Heart right ventricle (tissue), 16 donors: ENCODE measurements at regions of chr3 and their contacts with region 1.

Region 1: DNA sequence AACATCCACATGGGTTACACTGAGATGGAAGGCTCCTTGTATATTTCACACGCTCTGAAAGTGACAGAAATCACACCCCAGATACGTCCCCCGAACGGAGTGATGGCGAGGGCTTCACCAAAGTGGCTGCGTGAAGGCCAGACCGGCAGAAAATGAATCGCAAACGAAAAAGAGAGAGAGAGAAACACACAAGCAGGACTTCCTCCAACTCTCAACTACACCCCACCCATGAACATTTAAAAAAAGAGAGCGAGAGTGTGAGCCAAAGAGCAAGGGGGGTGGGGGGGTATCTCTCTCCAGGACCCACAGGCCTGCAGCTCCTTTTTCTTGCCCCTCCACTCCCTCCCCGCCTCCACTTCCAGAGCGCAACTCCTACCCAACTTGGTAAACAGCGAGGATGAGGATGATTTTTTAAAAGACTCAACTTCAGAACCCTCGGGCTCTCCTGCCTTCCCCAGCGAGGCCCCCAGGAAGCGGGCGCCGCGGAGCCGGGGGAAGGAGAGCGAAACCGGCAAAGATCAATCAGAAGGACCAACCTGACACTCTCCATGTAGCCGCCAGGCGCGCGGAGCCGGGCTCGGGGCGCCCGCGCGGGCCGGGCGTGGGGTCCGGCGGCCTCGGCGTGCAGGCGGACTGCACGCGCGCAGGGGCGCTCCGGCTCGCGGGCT is 519.1 kb downstream of the FOXP1 start:
- DNase-seq: peak in 1 of 2 donors; percentile 50
- ATAC-seq: peak; percentile 35 to 72 (median 56)
- H3K4me3 ChIP-seq: peak overlapping the region; percentile 26 to 78 (median 68)
- H3K27ac ChIP-seq: peak overlapping the region; percentile 66 to 98 (median 94)
- H3K4me1 ChIP-seq: peaks cover 5 to 73% (median 58%) of the 10 kb centered on the region in 9 donors
- H3K27me3 ChIP-seq: no peaks in the 10 kb centered on the region
- CTCF ChIP-seq: no peak

Region 2: DNA sequence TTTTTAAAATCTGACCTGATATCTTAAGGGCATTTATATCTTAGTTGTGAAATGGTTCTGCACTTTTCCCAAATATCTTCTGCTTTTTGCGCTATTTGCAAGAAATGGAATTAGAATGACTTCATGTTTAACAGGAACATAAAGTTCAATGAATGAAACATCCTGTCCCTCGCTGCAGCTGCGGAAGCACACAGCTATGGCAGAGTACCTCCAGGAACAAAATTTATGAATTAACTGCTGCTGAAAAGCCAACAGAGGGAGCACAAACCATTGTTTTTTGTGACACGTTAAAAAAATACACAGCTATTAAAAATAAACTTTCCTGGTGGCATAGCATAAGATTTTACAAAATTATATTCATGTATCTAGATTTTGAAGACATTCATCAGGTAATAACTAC is 347.6 kb before region 1 on chr3:
- intact Hi-C with region 1: loop called in 2 of 10 experiments (anchors 5 to 10 kb)
- DNase-seq: peak; percentile 14 to 32
- ATAC-seq: peak in 5 of 8 donors; percentile 49 to 88 (median 62)
- H3K4me3 ChIP-seq: no peak overlapping the region
- H3K27ac ChIP-seq: no peak overlapping the region
- H3K4me1 ChIP-seq: no peaks in the 10 kb centered on the region
- H3K27me3 ChIP-seq: no peaks in the 10 kb centered on the region
- CTCF ChIP-seq: peak; percentile 17 to 72 (median 54)

Region 3: DNA sequence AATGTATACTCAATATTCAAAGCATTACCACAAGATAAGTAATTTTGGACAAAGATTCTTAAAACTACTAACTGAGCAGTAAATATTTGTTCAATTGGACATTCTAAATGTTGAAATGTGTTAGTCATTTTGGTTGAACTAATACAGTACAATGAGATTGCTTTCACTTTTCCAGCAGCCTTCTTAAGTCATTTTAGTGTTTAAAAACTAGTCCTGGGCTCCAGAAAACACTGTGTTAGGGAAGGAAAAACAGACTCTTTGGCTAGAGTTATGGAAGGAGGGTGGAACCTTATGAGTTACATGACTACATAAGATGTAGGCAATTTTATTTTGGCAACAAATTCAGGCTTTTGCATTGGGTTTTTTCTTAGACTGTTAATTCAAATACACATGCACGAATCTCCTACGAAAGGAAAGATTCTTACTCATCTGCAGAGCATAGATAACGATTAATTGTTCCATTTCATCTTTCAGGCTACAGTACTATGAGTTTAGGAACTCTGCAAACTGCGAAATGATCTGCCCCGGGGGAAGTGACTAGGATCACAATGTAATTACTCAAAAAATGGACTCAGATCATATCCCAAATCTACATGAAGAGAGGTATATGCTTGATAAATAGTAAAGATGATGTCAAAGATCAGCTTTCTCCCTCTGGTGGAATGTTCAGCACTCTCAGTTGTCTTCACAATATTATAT is 259.2 kb before region 1 on chr3:
- intact Hi-C with region 1: no loop called
- DNase-seq: no peak
- ATAC-seq: peak in 3 of 8 donors; percentile 46 to 50 (median 49)
- H3K4me3 ChIP-seq: peak overlapping the region in 4 of 10 donors; percentile 4 to 25 (median 16)
- H3K27ac ChIP-seq: peak overlapping the region in 3 of 10 donors; percentile 8 to 13 (median 12)
- H3K4me1 ChIP-seq: peaks cover 0 to 13% (median 0%) of the 10 kb centered on the region in 9 donors
- H3K27me3 ChIP-seq: no peaks in the 10 kb centered on the region
- CTCF ChIP-seq: no peak

Region 4: DNA sequence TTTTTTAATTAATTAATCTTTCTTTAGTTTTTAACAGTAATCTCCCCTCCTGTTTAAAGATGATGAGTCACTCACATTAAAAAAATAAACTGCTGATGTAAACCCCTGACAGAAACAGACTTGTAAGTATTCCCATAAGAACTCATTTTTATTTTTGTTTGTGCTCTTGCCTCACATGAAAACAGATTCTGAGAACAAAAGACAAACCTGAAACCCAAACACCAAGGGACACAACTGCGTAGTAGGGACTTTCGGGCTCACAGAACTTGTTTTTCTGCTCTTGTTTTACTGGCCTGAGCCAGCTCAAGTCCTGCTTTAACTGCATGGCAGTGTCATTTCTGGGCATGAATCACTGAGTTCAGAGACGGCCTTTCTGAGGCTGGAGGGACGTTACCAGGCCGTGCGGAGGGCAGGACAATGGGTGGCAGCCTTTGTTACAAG is 81.7 kb before region 1 on chr3:
- intact Hi-C with region 1: loop called in 1 of 10 experiments (anchors 5 kb)
- DNase-seq: peak; percentile 15 to 54
- ATAC-seq: peak; percentile 53 to 86 (median 65)
- H3K4me3 ChIP-seq: peak overlapping the region in 3 of 10 donors; percentile 1 to 5 (median 4)
- H3K27ac ChIP-seq: peak overlapping the region; percentile 64 to 90 (median 82)
- H3K4me1 ChIP-seq: peaks cover 14 to 79% (median 51%) of the 10 kb centered on the region in 9 donors
- H3K27me3 ChIP-seq: no peaks in the 10 kb centered on the region
- CTCF ChIP-seq: no peak

Region 5: GRCh38 chr3:71006810-71007785 is 57.3 kb before region 1 on chr3:
- intact Hi-C with region 1: loop called in 6 of 10 experiments (anchors 2 to 10 kb)
- DNase-seq: no peak
- ATAC-seq: peak in 7 of 8 donors; percentile 48 to 82 (median 66)
- H3K4me3 ChIP-seq: no peak overlapping the region
- H3K27ac ChIP-seq: peak overlapping the region in 8 of 10 donors; percentile 16 to 59 (median 40)
- H3K4me1 ChIP-seq: peaks cover 3 to 86% (median 55%) of the 10 kb centered on the region in 9 donors
- H3K27me3 ChIP-seq: no peaks in the 10 kb centered on the region
- CTCF ChIP-seq: peak; percentile 10 to 76 (median 58)

Region 6: GRCh38 chr3:71022551-71023335 is 41.7 kb before region 1 on chr3:
- intact Hi-C with region 1: loop called in 1 of 10 experiments (anchors 5 kb)
- DNase-seq: no peak
- ATAC-seq: peak in 2 of 8 donors; percentile 17 to 26
- H3K4me3 ChIP-seq: no peak overlapping the region
- H3K27ac ChIP-seq: no peak overlapping the region
- H3K4me1 ChIP-seq: peaks cover 0 to 84% (median 32%) of the 10 kb centered on the region in 9 donors
- H3K27me3 ChIP-seq: no peaks in the 10 kb centered on the region
- CTCF ChIP-seq: peak in 5 of 9 donors; percentile 18 to 50 (median 30)

Region 7: GRCh38 chr3:71247221-71247976 is 183.0 kb after region 1 on chr3:
- intact Hi-C with region 1: loop called in 2 of 10 experiments (anchors 10 kb)
- DNase-seq: peak in 1 of 2 donors; percentile 24
- ATAC-seq: peak in 6 of 8 donors; percentile 24 to 66 (median 46)
- H3K4me3 ChIP-seq: no peak overlapping the region
- H3K27ac ChIP-seq: peak overlapping the region in 4 of 10 donors; percentile 40 to 82 (median 67)
- H3K4me1 ChIP-seq: peaks cover 8 to 76% (median 48%) of the 10 kb centered on the region in 9 donors
- H3K27me3 ChIP-seq: no peaks in the 10 kb centered on the region
- CTCF ChIP-seq: peak in 2 of 9 donors; percentile 14 to 15